Lower leg skin (tissue), 4 donors: ENCODE measurements at regions of chr4 and their contacts with region 1.

Region 1: GRCh38 chr4:116358588-116359222 is 726.7 kb downstream of the TRAM1L1 start:
- DNase-seq: peak; percentile 68 to 83
- H3K4me3 ChIP-seq: no peak overlapping the region
- CTCF ChIP-seq: no peak
- POLR2A ChIP-seq: no peak

Region 2: GRCh38 chr4:116453127-116453526 is 94.4 kb after region 1 on chr4:
- intact Hi-C with region 1: no loop called
- DNase-seq: no peak
- H3K4me3 ChIP-seq: no peak overlapping the region
- CTCF ChIP-seq: no peak
- POLR2A ChIP-seq: no peak

Region 3: GRCh38 chr4:116839826-116840225 is 481.1 kb after region 1 on chr4:
- intact Hi-C with region 1: no loop called
- DNase-seq: no peak
- H3K4me3 ChIP-seq: no peak overlapping the region
- CTCF ChIP-seq: no peak
- POLR2A ChIP-seq: no peak

Region 4: GRCh38 chr4:118102195-118102594 is 1743.5 kb after region 1 on chr4:
- intact Hi-C with region 1: loop called (anchors 5 kb)
- DNase-seq: no peak
- H3K4me3 ChIP-seq: no peak overlapping the region
- CTCF ChIP-seq: no peak
- POLR2A ChIP-seq: no peak